Dorsolateral prefrontal cortex (tissue), 120 donors: ENCODE measurements at regions of chrX and their contacts with region 1.

Region 1: GRCh38 chrX:46545111-46546005 is at the start of gene ZNF674:
- DNase-seq: peak; percentile 71 to 90 (median 88)
- H3K4me3 ChIP-seq: peak within 1 kb of the TSS; percentile 35 to 87 (median 74)
- H3K27ac ChIP-seq: peak within 1 kb of the TSS in 48 of 59 donors; percentile 0 to 85 (median 60)
- H3K27me3 ChIP-seq: peaks cover 0 to 47% (median 6%) of the 10 kb centered on the region in 45 donors
- CTCF ChIP-seq: peak in 54 of 56 donors; percentile 9 to 68 (median 42)
- total RNA-seq, gene ZNF674: 5.4 to 16.7 (median 10.6) TPM

Region 2: GRCh38 chrX:46366381-46367207 is 178.8 kb before region 1 on chrX:
- intact Hi-C with region 1: no loop called
- DNase-seq: no peak
- H3K4me3 ChIP-seq: no peak overlapping the region
- H3K27ac ChIP-seq: no peak overlapping the region
- H3K27me3 ChIP-seq: peaks cover 0 to 66% (median 12%) of the 10 kb centered on the region in 45 donors
- CTCF ChIP-seq: no peak

Region 3: GRCh38 chrX:46446727-46447378 is 98.5 kb before region 1 on chrX:
- intact Hi-C with region 1: loop called in 1 of 2 experiments (anchors 5 kb)
- DNase-seq: peak; percentile 66 to 88 (median 80)
- H3K4me3 ChIP-seq: peak overlapping the region; percentile 29 to 83 (median 67)
- H3K27ac ChIP-seq: peak overlapping the region in 55 of 59 donors; percentile 15 to 93 (median 79)
- H3K27me3 ChIP-seq: peaks cover 0 to 53% (median 8%) of the 10 kb centered on the region in 45 donors
- CTCF ChIP-seq: peak in 9 of 56 donors; percentile 8 to 29 (median 18)

Region 4: DNA sequence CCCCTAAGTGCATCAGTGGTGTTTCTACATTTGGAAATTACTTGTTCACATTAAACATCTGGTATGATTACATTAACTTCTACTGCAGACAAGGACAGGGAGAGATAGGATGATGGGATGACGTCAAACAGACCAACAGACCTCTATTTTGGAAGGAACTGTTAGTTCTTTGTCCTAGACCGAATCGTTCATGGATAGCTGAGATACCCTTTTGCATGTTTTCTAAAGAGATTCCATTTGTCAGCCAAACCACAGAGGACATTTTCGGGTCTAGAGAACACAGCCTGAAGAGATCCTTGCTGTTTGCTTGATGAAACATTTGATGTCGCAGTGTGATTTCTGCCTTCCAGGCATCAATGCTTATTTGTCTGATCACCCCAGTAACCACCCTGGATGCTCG is 55.9 kb after region 1 on chrX:
- intact Hi-C with region 1: loop called in 1 of 2 experiments (anchors 10 kb)
- DNase-seq: no peak
- H3K4me3 ChIP-seq: no peak overlapping the region
- H3K27ac ChIP-seq: peak overlapping the region in 18 of 59 donors; percentile 5 to 53 (median 28)
- H3K27me3 ChIP-seq: peaks cover 0 to 81% (median 4%) of the 10 kb centered on the region in 45 donors
- CTCF ChIP-seq: no peak